Left cardiac atrium (tissue), 4 donors: ENCODE measurements at regions of chr16 and their contacts with region 1.

Region 1: DNA sequence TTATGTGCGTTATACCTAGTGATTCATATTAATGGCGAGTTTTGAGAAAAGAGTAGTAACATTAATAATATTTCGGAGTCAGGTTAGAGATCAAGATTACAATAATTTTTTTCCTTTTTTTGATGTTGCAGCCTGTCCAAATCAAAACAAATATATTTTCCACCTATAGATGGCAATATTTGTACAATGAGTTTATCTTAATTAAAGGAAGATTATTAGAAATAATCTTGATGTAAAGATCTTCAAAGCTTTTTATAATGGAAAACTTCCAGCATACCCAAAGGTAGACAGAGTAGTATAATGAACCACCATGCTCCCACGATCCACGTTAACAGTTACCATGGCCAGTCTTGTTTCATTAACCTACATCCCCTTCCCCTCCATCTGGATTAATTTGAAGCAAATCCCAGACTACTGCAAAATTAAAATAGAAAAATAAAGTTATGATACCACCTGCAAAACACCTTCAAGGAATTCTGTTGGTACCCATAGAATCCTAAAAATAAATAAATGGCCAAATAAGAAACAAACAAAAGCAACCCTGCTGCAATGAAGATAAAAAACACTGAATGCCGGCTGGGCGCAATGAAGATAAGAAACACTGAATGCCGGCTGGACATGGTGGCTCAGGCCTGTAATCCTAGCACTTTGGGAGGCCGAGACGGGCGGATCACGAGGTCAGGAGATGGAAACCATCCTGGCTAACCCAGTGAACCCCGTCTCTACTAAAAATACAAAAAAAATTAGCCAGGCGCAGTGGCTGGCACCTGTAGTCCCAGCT is 46.5 kb upstream of the GINS3 start:
- DNase-seq: no peak
- ATAC-seq: no peak

Region 2: DNA sequence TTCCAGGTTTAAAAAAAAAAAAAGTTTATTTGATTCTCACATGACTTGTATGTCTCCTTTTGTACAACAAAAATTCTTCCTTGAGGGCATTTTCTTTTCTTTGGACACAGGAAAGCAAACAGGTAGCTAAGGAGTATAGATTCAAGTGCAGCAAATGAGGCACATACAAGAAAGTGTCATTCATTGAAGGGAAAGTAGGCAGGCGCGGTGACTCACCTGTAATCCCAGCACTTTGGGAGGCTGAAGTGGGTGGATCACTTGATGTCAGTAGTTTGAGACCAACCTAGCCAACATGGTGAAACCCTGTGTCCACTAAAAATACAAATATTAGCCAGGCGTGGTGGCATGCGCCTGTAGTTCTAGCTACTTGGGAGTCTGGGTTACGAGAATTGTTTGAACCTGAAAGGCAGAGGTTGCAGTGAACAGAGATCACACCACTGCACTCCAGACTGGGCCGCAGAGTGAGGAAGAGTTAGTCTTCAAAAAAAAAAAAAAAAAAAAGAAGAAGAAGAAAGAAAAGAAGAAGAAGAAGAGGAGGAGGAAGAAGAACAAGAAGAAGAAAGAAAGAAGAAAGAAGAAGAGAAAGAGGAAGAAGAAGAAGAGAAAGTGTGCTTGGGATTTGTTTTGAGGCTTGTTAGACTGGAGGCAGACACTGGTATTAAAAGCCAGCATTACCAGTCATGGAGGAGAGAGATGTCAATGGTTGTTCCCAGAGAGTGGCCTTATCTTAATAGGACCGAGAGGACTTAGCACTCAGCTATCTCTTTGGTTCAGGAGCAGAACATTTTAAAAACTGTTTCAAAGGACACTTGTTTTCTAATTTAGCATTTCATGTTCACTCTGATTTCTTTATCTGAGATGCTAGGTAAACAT is 66.2 kb after region 1 on chr16:
- intact Hi-C with region 1: loop called in 1 of 2 experiments (anchors 5 kb)
- DNase-seq: no peak
- ATAC-seq: peak in 1 of 2 donors; percentile 62